T-cell (primary cell): ENCODE measurements at regions of chr4 and their contacts with region 1.

Region 1: DNA sequence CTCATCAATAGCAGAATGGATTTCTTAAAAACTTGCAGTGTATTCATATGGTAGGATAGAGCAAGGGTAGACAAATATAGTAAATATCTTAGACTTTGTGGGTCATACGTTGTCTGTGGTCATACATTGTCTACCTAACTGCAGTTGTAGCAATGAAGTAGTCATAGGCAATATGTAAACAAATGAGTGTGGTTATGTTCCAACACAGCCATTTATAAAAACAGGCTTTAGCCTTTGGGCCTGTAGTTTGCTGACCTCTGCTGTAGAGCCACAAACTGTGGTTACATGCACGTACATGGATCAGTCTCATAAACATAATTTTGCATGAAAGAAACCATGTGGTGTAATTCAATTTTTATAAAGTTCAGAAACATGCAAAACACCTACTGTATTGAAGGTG is 98.9 kb downstream of the LARP1B start:
- DNase-seq: no peak
- ATAC-seq: no peak
- H3K4me3 ChIP-seq: no peak overlapping the region
- H3K4me3 Mint-ChIP-seq: no peak overlapping the region
- H3K27ac ChIP-seq: no peak overlapping the region
- H3K27ac Mint-ChIP-seq: no peak overlapping the region
- H3K4me1 ChIP-seq: no peaks in the 10 kb centered on the region
- H3K4me1 Mint-ChIP-seq: no peaks in the 10 kb centered on the region
- H3K27me3 ChIP-seq: no peaks in the 10 kb centered on the region
- H3K27me3 Mint-ChIP-seq: no peaks in the 10 kb centered on the region

Region 2: GRCh38 chr4:128145727-128146126 is 14.2 kb before region 1 on chr4:
- CTCF ChIA-PET with region 1: no interaction called
- POLR2A ChIA-PET with region 1: interaction called in 1 of 2 experiments, 10 read pairs
- DNase-seq: no peak
- ATAC-seq: no peak
- H3K4me3 ChIP-seq: no peak overlapping the region
- H3K4me3 Mint-ChIP-seq: no peak overlapping the region
- H3K27ac ChIP-seq: no peak overlapping the region
- H3K27ac Mint-ChIP-seq: no peak overlapping the region
- H3K4me1 ChIP-seq: no peaks in the 10 kb centered on the region
- H3K4me1 Mint-ChIP-seq: no peaks in the 10 kb centered on the region
- H3K27me3 ChIP-seq: no peaks in the 10 kb centered on the region
- H3K27me3 Mint-ChIP-seq: no peaks in the 10 kb centered on the region

Region 3: DNA sequence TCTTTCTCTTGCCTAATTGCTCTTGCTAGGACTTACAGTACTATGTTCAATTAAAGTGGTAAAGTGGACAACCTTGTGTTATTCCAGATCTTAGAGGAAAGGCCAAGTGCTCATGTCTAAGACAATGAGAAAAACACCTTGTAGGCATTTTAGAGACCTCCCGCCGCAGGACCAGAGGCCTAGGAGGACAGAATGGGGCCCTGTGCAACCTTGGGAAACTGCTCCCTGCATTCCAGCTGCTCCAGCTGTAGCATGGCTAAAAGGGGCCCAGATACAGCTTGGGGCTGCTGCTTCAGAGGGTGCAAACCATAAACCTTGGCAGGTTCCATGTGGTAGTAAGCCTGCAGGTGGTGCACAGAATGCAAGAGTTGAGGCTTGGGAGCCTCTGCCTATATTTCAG is 26.7 kb after region 1 on chr4:
- CTCF ChIA-PET with region 1: no interaction called
- POLR2A ChIA-PET with region 1: no interaction called
- DNase-seq: no peak
- ATAC-seq: no peak
- H3K4me3 ChIP-seq: no peak overlapping the region
- H3K4me3 Mint-ChIP-seq: no peak overlapping the region
- H3K27ac ChIP-seq: no peak overlapping the region
- H3K27ac Mint-ChIP-seq: no peak overlapping the region
- H3K4me1 ChIP-seq: peaks cover 0 to 3% of the 10 kb centered on the region in 2 experiments
- H3K4me1 Mint-ChIP-seq: peaks cover 0 to 5% (median 2%) of the 10 kb centered on the region in 3 donors
- H3K27me3 ChIP-seq: no peaks in the 10 kb centered on the region
- H3K27me3 Mint-ChIP-seq: no peaks in the 10 kb centered on the region